Activated naive CD4-positive, alpha-beta T cell treated with anti-CD3 and anti-CD28 coated beads for 36 hours (primary cell): ENCODE measurements at regions of chr7 and their contacts with region 1.

Region 1: DNA sequence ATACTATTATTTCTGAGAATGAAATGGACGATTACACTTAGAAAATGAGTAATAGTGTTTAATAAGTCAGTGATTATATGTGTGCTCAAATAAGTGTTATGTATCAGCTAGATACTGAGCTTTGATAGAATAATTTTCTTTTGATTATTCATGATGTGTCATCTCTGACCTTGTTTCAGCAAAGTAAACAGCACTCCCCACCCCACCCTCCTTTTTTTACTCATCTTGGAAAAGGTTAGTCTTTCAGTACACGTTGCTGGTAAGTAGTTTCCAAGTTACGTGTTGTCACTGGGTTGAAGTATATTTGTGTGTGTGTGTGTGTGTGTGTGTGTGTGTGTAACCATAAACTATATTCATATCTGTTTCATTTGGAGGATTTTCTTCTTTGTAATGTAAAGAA is 84.1 kb downstream of the GNAI1 start:
- DNase-seq: peak; percentile 18
- H3K4me3 Mint-ChIP-seq: no peak overlapping the region
- H3K27ac Mint-ChIP-seq: no peak overlapping the region
- H3K4me1 Mint-ChIP-seq: peaks cover 7% of the 10 kb centered on the region
- H3K27me3 Mint-ChIP-seq: peaks cover under 1% of the 10 kb centered on the region

Region 2: GRCh38 chr7:80172387-80172786 is 46.3 kb before region 1 on chr7:
- CTCF ChIA-PET with region 1: no interaction called
- intact Hi-C with region 1: loop called (anchors 1 kb)
- DNase-seq: no peak
- H3K4me3 Mint-ChIP-seq: peak overlapping the region; percentile 24
- H3K27ac Mint-ChIP-seq: no peak overlapping the region
- H3K4me1 Mint-ChIP-seq: peaks cover 33% of the 10 kb centered on the region
- H3K27me3 Mint-ChIP-seq: peaks cover 8% of the 10 kb centered on the region

Region 3: GRCh38 chr7:80197627-80198026 is 21.1 kb before region 1 on chr7:
- CTCF ChIA-PET with region 1: no interaction called
- intact Hi-C with region 1: no loop called
- DNase-seq: no peak
- H3K4me3 Mint-ChIP-seq: no peak overlapping the region
- H3K27ac Mint-ChIP-seq: no peak overlapping the region
- H3K4me1 Mint-ChIP-seq: no peaks in the 10 kb centered on the region
- H3K27me3 Mint-ChIP-seq: no peaks in the 10 kb centered on the region

Region 4: DNA sequence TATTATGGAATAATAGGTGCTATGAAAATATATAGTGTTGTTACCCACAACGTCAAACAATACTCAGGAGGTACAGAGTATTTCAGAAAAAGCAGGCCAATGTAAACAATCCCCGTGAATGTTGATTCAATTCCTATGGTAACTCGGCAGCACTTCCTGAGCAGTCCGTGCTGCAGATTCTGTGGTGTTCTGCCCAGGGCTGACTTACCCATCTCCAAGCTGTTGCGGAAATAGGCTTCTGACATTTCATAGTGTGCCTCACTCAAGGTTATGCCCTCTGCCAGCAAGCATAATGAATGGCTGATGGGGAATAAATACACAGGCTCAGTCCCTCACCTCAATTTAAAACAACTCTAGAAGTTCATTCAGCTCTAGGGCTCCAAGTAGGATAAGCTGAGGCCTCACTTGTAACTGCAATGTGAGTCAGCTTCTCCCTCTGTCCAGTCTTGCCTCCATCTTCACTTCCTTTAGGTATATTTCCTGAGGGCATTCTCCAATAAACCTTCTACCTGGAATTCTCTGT is 93.5 kb after region 1 on chr7:
- CTCF ChIA-PET with region 1: no interaction called
- intact Hi-C with region 1: loop called (anchors 5 kb)
- DNase-seq: peak; percentile 49
- H3K4me3 Mint-ChIP-seq: peak overlapping the region; percentile 16
- H3K27ac Mint-ChIP-seq: peak overlapping the region; percentile 38
- H3K4me1 Mint-ChIP-seq: peaks cover 30% of the 10 kb centered on the region
- H3K27me3 Mint-ChIP-seq: no peaks in the 10 kb centered on the region